ENCODE measurements at regions of chr1 and their contacts with region 1.

Region 1: DNA sequence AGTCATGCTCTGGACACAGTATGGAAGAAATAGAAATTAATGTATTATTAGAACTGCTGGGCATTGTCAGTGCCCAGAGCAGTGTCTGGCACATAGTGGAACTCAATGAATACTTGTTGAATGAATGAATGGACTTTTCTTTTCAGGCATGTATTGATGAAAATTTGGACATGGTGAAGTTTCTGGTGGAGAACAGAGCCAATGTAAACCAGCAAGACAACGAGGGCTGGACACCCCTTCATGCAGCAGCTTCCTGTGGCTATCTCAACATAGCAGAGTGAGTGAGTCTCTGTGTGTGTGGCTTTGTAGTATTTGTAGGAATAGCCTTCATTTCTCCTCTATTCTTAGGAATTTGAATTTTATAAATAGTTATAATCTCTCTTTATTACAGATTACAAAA is 68.1 kb downstream of the PPP1R12B start:
- DNase-seq: no peak
- H3K4me3 ChIP-seq: no peak overlapping the region
- H3K27me3 ChIP-seq: no peaks in the 10 kb centered on the region
- CTCF ChIP-seq: no peak

Region 2: DNA sequence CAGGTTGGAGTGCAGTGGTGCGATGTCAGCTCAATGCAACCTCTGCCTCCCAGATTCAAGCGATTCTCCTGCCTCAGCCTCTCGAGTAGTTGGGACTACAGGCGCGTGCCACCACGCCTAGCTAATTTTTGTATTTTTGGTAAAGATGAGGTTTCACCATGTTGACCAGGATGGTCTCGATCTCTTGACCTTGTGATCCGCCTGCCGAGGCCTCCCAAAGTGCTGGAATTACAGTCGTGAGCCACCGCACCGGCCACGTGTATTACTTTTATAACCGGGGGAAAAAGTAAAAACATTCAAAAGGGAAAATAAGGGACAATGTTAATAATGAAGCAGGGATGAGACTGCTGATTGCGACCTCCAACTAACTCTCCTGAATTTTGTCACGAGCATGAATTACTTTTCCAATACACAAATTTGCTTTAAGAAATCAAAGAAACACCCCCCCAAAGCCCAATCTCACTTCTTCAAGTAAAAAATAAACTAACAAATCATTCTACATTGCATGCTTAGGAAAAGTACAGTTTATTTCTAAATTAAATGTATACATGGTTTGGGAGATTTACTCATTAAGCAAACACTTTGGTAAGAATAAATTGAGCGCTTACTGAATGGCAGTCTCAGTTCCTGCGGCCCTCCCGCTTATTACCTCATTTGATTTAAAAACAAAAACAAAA is 1378.3 kb after region 1 on chr1:
- CTCF ChIA-PET with region 1: no interaction called
- POLR2A ChIA-PET with region 1: interaction called, 16 read pairs
- DNase-seq: no peak
- H3K4me3 ChIP-seq: peak overlapping the region; percentile 26
- H3K27me3 ChIP-seq: no peaks in the 10 kb centered on the region
- CTCF ChIP-seq: no peak